Activated CD4-positive, alpha-beta memory T cell treated with anti-CD3 and anti-CD28 coated beads, Interleukin-2, amount 10 ng/mL, durations not matched to agents 7 days and 5 days (primary cell): ENCODE measurements at regions of chr5 and their contacts with region 1.

Region 1: GRCh38 chr5:150129813-150130492 is 25.7 kb downstream of the PDGFRB start:
- DNase-seq: peak; percentile 69
- H3K4me3 Mint-ChIP-seq: no peak overlapping the region
- H3K27ac Mint-ChIP-seq: no peak overlapping the region
- H3K4me1 Mint-ChIP-seq: peaks cover 2% of the 10 kb centered on the region
- H3K27me3 Mint-ChIP-seq: peaks cover under 1% of the 10 kb centered on the region

Region 2: DNA sequence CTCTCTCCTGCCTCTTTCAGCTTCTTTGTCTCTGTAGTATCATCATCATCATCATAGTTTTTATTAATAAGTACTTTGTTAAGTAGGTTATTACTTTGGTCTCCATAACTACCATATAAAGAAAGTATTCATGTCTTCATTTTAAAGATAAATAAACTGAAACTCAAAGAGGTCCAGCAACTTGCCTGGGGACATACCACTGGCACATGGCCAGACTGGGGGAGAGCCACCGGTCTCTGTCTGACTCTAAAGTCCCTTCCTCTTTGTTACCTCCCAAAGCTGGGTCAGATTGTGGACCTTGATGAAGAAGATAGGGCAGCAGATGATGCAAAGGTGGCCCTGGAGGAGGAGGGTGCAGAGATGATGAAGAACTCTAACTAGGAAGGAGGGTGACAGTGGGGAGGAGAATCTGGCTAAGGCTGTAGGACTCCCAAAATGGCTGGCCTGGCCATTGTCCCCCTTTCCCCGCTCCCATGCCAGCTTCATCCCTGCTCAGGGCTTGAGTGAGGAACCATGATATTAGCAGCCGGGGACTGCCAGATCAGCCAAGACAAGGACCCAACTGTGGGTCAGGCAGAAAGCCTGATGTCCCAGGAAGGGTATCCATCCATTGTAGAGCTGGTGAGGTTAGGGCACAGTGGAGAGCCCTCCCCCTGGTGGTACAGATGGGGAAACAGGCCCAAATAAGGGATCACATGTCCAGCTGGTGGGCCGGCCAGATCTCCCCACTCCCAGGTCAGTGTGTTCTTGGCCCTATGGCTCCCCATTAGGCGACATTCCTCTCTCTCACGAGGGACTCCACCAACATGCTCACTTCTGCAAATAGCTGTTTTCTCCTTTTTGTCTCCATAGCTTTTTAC is 45.4 kb after region 1 on chr5:
- CTCF ChIA-PET with region 1: interaction called, 15 read pairs
- POLR2A ChIA-PET with region 1: no interaction called
- DNase-seq: no peak
- H3K4me3 Mint-ChIP-seq: no peak overlapping the region
- H3K27ac Mint-ChIP-seq: no peak overlapping the region
- H3K4me1 Mint-ChIP-seq: no peaks in the 10 kb centered on the region
- H3K27me3 Mint-ChIP-seq: peaks cover 19% of the 10 kb centered on the region

Region 3: DNA sequence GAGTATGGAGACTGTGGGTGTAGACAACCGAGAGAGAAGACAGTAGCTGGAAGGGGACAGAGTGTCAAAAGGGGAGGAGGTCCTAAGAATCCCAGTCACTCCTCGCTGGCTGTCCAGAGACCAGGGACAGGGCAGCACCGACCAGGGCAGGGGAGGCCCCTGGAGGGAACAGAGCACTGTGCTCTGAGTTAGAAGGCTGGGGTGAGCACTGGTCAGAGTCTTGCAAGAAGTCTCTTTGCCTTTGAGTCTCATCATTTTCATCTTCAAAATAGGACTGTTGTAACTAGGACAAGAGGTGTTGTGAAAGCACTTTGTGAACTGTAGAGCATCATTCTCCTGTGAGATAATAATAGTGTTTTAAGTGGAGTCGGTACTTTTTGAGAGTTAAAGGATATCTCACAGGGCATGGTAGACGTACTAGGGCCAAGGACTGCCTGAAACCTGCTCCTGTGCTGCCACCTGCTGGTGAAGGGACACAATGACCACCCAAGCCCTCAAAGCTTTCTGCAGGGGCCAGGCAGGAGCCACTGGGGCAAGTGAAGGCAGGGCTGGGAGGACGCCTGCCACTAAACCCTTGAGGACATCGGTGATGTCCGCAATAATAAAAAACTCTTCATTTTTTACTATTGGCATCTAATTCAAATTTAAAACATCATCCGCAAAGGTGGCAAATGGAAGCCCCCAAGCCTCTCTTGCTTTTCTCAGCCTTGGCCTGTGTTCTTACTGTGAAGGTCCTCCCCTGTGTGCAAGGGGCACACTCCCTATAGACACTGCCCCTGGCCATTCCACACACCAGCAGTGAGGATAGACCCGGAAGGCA is 88.1 kb after region 1 on chr5:
- CTCF ChIA-PET with region 1: interaction called, 22 read pairs
- POLR2A ChIA-PET with region 1: interaction called, 3 read pairs
- DNase-seq: peak; percentile 86
- H3K4me3 Mint-ChIP-seq: no peak overlapping the region
- H3K27ac Mint-ChIP-seq: no peak overlapping the region
- H3K4me1 Mint-ChIP-seq: no peaks in the 10 kb centered on the region
- H3K27me3 Mint-ChIP-seq: peaks cover 9% of the 10 kb centered on the region

Region 4: GRCh38 chr5:150449517-150450339 is 319.8 kb after region 1 on chr5 and contains the start of gene RPS14:
- CTCF ChIA-PET with region 1: no interaction called
- POLR2A ChIA-PET with region 1: no interaction called
- DNase-seq: peak; percentile 95
- H3K4me3 Mint-ChIP-seq: peak within 1 kb of the TSS; percentile 82
- H3K27ac Mint-ChIP-seq: peak within 1 kb of the TSS; percentile 92
- H3K4me1 Mint-ChIP-seq: peaks cover 34% of the 10 kb centered on the region
- H3K27me3 Mint-ChIP-seq: no peaks in the 10 kb centered on the region
- total RNA-seq, gene RPS14: 2,316 to 2,367 TPM

Region 5: DNA sequence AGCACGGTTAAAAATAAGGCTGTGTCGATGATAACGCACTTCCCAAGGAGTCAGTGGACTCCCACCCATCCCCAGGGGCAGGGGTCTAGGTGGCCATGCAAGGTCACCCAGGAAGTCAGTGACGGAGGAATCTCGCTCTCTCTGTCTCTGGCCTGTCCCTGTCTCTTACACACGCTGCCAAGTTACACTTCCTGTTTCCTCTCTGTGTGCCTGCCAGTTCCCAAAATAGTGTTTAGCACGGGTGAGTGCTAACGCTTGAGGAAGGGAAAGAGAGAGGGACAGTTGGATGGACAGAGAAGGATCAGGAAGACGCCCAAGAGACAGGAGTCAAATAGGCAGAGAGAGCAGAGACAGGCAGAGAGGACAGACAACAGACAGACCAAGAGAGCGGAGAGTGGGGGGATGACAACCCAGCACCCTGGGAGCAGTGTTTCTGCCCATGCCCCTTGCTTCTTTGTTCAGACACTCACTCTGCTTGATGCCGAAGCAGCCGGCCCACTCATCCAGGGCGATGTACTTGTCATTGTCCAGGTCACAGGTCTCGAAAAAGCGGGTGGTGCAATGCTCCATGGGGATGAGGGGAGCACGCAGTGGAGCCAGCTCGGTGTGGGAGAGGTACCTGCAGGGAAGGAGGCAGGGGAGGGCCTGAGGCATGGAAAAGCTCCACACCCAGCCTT is 1533.8 kb after region 1 on chr5:
- CTCF ChIA-PET with region 1: no interaction called
- POLR2A ChIA-PET with region 1: no interaction called
- DNase-seq: no peak
- H3K4me3 Mint-ChIP-seq: no peak overlapping the region
- H3K27ac Mint-ChIP-seq: no peak overlapping the region
- H3K4me1 Mint-ChIP-seq: peaks cover 19% of the 10 kb centered on the region
- H3K27me3 Mint-ChIP-seq: peaks cover 8% of the 10 kb centered on the region